ENCODE measurements at regions of chr4 and their contacts with region 1.

Region 1: GRCh38 chr4:123244137-123244536 is 152.5 kb upstream of the SPRY1 start:
- DNase-seq: peak; percentile 64 to 88 (median 69)
- ATAC-seq: peak; percentile 98 to 100
- H3K4me3 ChIP-seq: no peak overlapping the region
- H3K27ac ChIP-seq: no peak overlapping the region
- H3K4me1 ChIP-seq: peaks cover 1% of the 10 kb centered on the region
- H3K27me3 ChIP-seq: no peaks in the 10 kb centered on the region

Region 2: DNA sequence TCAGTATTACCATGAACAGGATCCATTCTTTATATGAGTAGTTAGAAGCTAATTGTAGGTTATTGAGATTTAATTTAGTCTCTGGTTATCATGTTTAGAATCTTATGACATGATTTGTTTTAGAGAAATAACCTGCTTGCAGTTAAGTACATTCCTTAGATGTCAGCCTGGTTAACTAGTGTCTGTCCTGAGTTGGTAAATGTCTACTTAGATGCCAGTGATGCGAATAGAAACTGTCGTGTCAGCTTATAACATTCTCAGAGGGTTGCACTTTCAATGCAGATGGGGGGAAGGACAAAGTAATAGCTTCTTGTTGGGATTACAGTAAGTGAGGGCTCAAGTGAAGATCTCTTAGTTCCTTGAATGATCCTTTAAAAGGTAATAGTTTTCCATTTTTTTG is 75.3 kb before region 1 on chr4:
- intact Hi-C with region 1: no loop called
- DNase-seq: no peak
- ATAC-seq: no peak
- H3K4me3 ChIP-seq: no peak overlapping the region
- H3K27ac ChIP-seq: no peak overlapping the region
- H3K4me1 ChIP-seq: no peaks in the 10 kb centered on the region
- H3K27me3 ChIP-seq: no peaks in the 10 kb centered on the region

Region 3: GRCh38 chr4:123340381-123340701 is 96.2 kb after region 1 on chr4:
- intact Hi-C with region 1: loop called in 1 of 4 experiments (anchors 10 kb)
- DNase-seq: no peak
- ATAC-seq: peak; percentile 40 to 85
- H3K4me3 ChIP-seq: no peak overlapping the region
- H3K27ac ChIP-seq: no peak overlapping the region
- H3K4me1 ChIP-seq: peaks cover 3% of the 10 kb centered on the region
- H3K27me3 ChIP-seq: no peaks in the 10 kb centered on the region